Activated CD8-positive, alpha-beta T cell treated with anti-CD3 and anti-CD28 coated beads for 36 hours (primary cell): ENCODE measurements at regions of chr7 and their contacts with region 1.

Region 1: GRCh38 chr7:139370301-139370942 is 10.7 kb downstream of the LUC7L2 start:
- DNase-seq: no peak
- ATAC-seq: no peak
- H3K4me3 Mint-ChIP-seq: no peak overlapping the region
- H3K27ac Mint-ChIP-seq: peak overlapping the region; percentile 66
- H3K4me1 Mint-ChIP-seq: peaks cover 68% of the 10 kb centered on the region
- H3K27me3 Mint-ChIP-seq: no peaks in the 10 kb centered on the region
- CTCF ChIP-seq: no peak

Region 2: DNA sequence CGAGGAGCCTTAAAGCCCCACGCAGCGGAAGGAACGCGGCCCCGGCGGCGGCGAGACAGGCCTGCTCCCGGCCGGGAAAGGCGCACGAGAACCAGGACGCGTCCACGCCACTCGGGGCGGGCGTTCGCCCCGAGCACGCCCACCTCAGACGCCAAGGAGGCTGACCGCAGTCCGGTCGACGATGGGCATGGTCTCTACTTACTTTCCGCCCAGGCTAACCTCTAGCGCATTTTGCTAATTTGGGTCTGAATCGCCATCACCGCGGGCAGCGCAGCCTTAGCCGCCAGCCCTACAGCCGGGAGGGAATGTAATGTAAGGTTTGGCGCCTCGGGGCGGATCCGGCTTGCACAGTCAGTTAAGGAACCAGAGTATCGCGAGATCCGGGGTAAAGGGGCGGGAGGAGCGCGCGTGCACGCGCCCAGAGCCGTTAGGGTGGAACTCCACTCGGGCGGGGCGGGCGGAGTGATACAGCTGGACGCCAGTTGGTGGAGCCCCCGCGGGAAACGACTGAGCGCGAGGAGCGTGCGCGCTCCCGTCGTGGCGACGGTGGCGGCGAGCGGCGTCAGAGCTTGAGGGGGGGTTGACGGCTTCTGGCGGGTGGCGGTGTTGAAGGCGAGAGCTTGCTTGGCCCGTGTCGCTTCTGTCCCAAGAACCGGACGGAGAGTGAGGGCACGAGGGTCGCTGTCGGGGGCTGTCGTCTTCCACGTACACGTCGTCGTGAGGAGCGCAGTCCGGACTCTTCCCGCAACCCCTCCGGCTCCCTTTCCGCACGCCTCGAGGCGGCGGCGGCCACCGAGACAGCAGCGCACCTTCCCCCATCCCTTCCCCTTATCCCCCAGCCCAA is 10.8 kb before region 1 on chr7 and contains the start of gene LUC7L2:
- CTCF ChIA-PET with region 1: interaction called, 4 read pairs
- POLR2A ChIA-PET with region 1: interaction called, 30 read pairs
- intact Hi-C with region 1: no loop called
- DNase-seq: peak; percentile 100
- ATAC-seq: peak; percentile 76
- H3K4me3 Mint-ChIP-seq: peak within 1 kb of the TSS; percentile 92
- H3K27ac Mint-ChIP-seq: peak within 1 kb of the TSS; percentile 98
- H3K4me1 Mint-ChIP-seq: peaks cover 28% of the 10 kb centered on the region
- H3K27me3 Mint-ChIP-seq: no peaks in the 10 kb centered on the region
- CTCF ChIP-seq: no peak
- total RNA-seq, gene LUC7L2: 133 to 140 TPM

Region 3: DNA sequence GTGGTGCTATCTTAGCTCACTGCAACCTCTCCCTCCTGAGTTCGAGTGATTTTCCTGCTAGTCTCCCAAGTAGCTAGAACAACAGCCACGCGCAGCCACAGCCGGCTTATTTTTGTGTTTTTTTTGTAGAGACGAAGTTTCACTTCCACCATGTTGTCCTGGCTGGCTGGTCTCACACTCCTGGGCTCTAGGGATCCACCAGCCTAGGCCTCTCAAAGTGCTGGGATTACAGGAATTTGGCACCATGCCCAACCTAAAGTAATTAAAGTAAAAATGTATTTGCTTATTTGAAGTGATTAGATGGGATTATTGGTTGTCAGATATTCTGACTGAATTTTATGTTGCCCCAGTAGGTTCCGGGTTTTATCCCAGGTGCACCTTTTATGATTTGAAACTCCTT is 12.0 kb after region 1 on chr7:
- CTCF ChIA-PET with region 1: interaction called, 4 read pairs
- POLR2A ChIA-PET with region 1: interaction called, 19 read pairs
- intact Hi-C with region 1: no loop called
- DNase-seq: no peak
- ATAC-seq: no peak
- H3K4me3 Mint-ChIP-seq: no peak overlapping the region
- H3K27ac Mint-ChIP-seq: no peak overlapping the region
- H3K4me1 Mint-ChIP-seq: peaks cover 5% of the 10 kb centered on the region
- H3K27me3 Mint-ChIP-seq: no peaks in the 10 kb centered on the region
- CTCF ChIP-seq: no peak

Region 4: DNA sequence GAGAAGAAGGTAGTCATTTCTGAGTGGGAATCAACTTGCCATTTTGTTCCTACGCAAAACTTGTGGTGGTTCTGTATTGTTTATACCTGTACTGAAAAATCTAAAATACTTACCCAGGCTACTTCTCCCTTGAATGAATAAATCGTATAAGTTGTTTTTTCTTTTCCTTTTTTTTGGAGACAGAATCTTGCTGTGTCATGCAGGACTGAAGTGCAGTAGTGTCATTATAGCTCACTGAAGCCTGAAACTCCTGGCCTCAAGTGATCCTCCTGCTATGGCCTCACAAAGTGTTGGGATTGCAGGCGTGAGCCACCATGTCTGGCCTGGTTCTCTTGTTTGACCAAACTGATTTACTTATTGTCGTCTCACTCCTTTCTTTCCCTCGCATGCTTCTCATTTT is 17.2 kb after region 1 on chr7:
- CTCF ChIA-PET with region 1: interaction called, 4 read pairs
- POLR2A ChIA-PET with region 1: interaction called, 19 read pairs
- intact Hi-C with region 1: no loop called
- DNase-seq: no peak
- ATAC-seq: no peak
- H3K4me3 Mint-ChIP-seq: no peak overlapping the region
- H3K27ac Mint-ChIP-seq: peak overlapping the region; percentile 14
- H3K4me1 Mint-ChIP-seq: peaks cover 12% of the 10 kb centered on the region
- H3K27me3 Mint-ChIP-seq: no peaks in the 10 kb centered on the region
- CTCF ChIP-seq: no peak